HEK293T (cell line): ENCODE measurements at regions of chr17 and their contacts with region 1.

Region 1: GRCh38 chr17:73283841-73284282 is 22.2 kb upstream of the CPSF4L start:
- DNase-seq: no peak

Region 2: DNA sequence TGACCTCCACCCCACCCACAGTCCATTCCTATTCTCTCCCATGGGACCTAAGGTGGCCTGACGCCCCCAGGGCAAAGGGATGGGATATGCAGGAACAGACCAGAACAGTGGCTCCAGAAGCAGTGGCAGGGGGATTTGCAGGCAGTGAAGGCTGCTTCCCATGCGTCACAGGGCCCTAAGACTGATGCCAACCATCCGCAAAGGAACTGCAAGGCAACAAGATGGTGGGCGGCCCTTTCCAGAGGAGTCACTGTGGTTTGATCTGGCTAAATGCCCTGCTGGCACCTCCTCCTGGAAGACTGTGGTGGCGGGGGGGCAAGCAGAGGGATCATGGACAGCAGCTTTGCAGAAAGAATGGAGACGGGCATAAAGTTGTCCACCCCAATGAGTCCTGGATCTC is 187.0 kb before region 1 on chr17:
- CTCF ChIA-PET with region 1: no interaction called
- POLR2A ChIA-PET with region 1: no interaction called
- DNase-seq: no peak

Region 3: DNA sequence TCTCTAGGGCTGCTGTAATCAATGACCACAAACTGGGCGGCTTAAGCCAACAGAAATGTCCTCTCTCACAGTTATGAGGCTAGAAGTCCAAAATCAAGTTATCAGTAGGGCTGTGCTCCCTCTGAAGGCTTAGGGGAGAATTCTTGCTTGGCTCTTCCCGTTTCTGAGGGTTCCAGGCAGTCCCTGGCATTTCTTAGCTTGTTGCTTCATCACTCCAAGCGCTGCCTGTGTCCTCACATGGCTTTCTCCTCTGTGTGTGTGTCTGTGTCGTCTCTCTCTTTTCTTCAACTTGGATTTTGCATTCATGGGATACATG is 41.6 kb after region 1 on chr17:
- CTCF ChIA-PET with region 1: interaction called, 11 read pairs
- POLR2A ChIA-PET with region 1: no interaction called
- DNase-seq: no peak